ENCODE measurements at regions of chr18 and their contacts with region 1.

Region 1: GRCh38 chr18:13500227-13500865 is 226.0 kb downstream of the FAM210A start:
- DNase-seq: no peak
- ATAC-seq: no peak
- H3K4me3 Mint-ChIP-seq: no peak overlapping the region
- H3K27ac Mint-ChIP-seq: no peak overlapping the region
- H3K4me1 Mint-ChIP-seq: peaks cover 19% of the 10 kb centered on the region
- H3K27me3 Mint-ChIP-seq: no peaks in the 10 kb centered on the region
- CTCF ChIP-seq: no peak

Region 2: DNA sequence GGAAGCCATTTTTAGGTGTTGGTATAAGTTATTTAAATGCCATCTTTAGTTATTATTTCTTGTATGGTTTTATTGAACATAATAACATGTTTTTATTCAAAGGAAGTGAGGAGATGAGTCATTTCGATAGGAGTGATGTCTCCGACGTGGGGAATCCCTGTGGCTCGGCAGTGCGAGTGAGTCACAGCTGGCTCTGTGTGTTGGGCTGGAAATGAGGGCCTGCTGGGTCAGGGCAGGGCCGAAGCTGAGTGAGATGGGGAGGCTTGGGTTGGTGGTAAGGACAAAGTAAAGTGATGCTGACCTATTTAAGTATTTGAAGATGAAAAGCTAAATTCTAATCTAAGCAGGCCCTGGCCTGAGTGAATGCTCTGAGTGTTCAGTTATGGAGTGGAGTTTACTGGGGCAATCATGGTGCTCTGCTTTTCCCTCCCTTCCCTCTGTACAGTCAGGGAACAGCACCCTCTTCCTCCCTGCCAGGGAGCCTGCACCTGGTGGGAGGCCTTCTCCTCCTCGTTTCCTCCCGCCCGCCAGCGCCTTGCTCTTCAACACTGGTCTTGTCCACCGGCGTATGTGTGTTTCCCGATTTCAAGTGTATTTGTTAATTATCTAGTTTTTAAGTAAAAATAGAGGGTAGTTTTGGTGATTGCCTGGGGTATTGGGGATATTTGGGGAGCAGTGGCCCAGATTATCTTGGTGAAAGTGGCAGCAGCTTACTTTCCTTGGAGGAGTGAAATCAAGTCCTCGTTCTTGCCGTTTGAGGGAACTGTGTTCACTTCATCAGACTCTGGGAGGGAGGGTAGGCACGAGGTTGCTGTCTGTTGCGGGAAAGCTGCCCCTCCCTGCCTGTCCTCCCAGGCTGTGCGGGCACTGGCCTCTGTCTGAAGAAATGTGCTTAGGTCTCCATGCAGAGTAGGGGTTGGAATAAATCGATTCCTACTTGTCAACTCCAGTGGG is 124.8 kb before region 1 on chr18:
- CTCF ChIA-PET with region 1: no interaction called
- POLR2A ChIA-PET with region 1: no interaction called
- intact Hi-C with region 1: loop called (anchors 1 kb)
- DNase-seq: no peak
- ATAC-seq: peak; percentile 92
- H3K4me3 Mint-ChIP-seq: peak overlapping the region; percentile 25
- H3K27ac Mint-ChIP-seq: peak overlapping the region; percentile 65
- H3K4me1 Mint-ChIP-seq: peaks cover 38% of the 10 kb centered on the region
- H3K27me3 Mint-ChIP-seq: no peaks in the 10 kb centered on the region
- CTCF ChIP-seq: no peak

Region 3: DNA sequence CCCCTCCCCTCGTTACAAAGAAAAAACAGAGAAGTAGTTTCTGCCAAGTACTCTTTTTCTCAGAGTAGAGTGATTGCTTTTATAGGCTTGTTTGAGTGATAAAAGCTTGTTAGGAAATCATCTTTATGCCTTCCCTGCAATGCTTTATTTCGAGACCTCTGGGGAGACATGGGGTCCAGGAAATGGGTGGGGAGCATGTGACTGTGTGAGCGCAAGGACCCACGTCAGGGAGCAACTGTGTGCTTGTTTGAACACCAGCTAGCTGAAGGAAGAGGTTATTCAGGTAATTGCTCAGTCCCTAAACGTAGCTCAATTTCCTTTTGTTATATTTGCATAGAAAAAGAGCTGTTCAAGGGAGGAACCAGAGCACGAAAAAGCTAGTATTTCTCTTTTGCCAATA is 38.7 kb after region 1 on chr18:
- CTCF ChIA-PET with region 1: no interaction called
- POLR2A ChIA-PET with region 1: no interaction called
- intact Hi-C with region 1: loop called (anchors 5 kb)
- DNase-seq: no peak
- ATAC-seq: peak; percentile 81
- H3K4me3 Mint-ChIP-seq: peak overlapping the region; percentile 75
- H3K27ac Mint-ChIP-seq: peak overlapping the region; percentile 85
- H3K4me1 Mint-ChIP-seq: peaks cover 44% of the 10 kb centered on the region
- H3K27me3 Mint-ChIP-seq: no peaks in the 10 kb centered on the region
- CTCF ChIP-seq: no peak

Measured in activated B cell treated with CpG ODN at 0.5 μM for 24 hours (primary cell).